ENCODE measurements at regions of chr5 and their contacts with region 1.

Region 1: GRCh38 chr5:142012792-142013388 is at the start of gene GNPDA1:
- DNase-seq: peak; percentile 78
- H3K4me3 Mint-ChIP-seq: peak within 1 kb of the TSS; percentile 82
- H3K27ac Mint-ChIP-seq: peak within 1 kb of the TSS; percentile 82
- H3K4me1 Mint-ChIP-seq: peaks cover 35% of the 10 kb centered on the region
- H3K27me3 Mint-ChIP-seq: no peaks in the 10 kb centered on the region
- CTCF ChIP-seq: no peak
- total RNA-seq, gene GNPDA1: 36.1 and 60.9 TPM in 2 replicates

Region 2: DNA sequence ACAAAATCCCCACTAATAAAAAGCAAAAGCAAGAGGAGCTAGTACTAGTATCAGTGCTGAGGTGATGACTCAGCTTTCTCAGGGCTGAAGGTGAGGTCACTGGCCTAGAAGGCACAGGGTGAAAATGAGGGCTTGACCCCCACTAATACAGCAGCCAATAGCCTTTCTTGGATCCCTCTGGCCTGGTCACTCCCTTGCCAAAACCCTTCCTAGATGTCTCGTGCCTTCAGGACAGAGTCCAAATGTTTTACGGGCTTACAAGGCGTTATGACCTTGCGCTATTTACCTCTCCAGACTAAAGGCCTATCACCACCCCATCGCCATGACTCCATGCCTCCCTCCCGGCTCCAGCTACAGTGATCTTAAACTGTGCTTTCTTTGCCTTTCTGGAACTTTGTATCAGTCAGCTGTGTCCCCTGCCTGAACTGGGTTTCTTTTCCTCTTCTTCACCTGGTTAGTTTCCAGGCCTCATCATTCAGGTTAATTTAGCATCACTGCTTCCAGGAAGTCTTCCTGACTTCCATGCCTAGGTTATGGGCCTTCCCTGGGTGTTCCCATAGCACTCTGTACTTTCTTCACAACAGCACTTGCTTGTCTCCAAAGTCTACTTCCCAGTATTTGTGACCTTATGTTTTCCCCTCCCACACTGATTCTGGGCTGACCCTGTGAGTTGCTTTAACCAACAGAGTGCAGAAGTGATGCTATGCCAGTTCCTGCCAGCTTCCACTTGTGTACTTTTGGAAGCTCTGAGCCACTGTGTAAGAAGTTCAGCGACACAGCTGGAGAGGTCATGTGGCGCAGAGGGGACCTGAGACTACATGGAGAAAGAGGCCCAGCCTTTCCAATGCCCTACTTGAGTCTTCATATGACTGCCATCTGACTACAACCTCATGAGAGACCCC is 93.4 kb before region 1 on chr5:
- CTCF ChIA-PET with region 1: no interaction called
- POLR2A ChIA-PET with region 1: no interaction called
- intact Hi-C with region 1: no loop called
- DNase-seq: no peak
- H3K4me3 Mint-ChIP-seq: no peak overlapping the region
- H3K27ac Mint-ChIP-seq: no peak overlapping the region
- H3K4me1 Mint-ChIP-seq: peaks cover 12% of the 10 kb centered on the region
- H3K27me3 Mint-ChIP-seq: peaks cover 16% of the 10 kb centered on the region
- CTCF ChIP-seq: no peak

Region 3: DNA sequence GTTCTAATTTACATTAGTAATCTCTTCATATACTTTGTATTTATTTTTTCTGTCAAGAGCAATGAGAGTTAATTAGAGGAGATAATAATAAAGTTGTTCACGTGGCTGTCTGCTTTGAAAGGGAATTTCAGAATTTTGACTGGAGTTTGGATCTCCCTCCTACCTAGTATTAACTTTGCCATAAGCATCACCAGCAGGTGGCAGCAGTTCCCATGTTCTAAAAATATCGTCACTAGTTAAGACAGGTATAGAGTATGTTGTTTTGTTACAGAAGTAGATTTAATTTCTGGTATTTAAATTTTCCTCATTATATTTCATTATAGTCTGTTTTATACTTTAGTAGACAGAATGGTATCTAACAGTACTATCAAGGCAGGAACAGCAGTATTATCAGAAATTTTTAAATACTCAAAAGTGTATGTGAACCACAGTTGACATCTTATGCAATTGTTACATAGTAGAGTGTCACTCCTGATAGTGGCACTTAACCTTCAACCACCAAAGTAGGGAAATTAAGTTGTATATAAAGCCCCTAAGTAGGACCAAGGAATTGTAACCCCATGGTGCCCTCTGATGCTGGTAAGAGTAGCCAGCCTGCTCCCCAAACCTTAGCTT is 20.4 kb before region 1 on chr5:
- CTCF ChIA-PET with region 1: interaction called, 100 read pairs
- POLR2A ChIA-PET with region 1: interaction called, 51 read pairs
- intact Hi-C with region 1: loop called (anchors 1 kb)
- DNase-seq: peak; percentile 88
- H3K4me3 Mint-ChIP-seq: no peak overlapping the region
- H3K27ac Mint-ChIP-seq: no peak overlapping the region
- H3K4me1 Mint-ChIP-seq: no peaks in the 10 kb centered on the region
- H3K27me3 Mint-ChIP-seq: no peaks in the 10 kb centered on the region
- CTCF ChIP-seq: peak; percentile 82

Region 4: GRCh38 chr5:142000703-142001484 is 12.0 kb before region 1 on chr5:
- CTCF ChIA-PET with region 1: interaction called, 22 read pairs
- POLR2A ChIA-PET with region 1: interaction called, 34 read pairs
- intact Hi-C with region 1: no loop called
- DNase-seq: peak; percentile 43
- H3K4me3 Mint-ChIP-seq: no peak overlapping the region
- H3K27ac Mint-ChIP-seq: no peak overlapping the region
- H3K4me1 Mint-ChIP-seq: peaks cover 9% of the 10 kb centered on the region
- H3K27me3 Mint-ChIP-seq: no peaks in the 10 kb centered on the region
- CTCF ChIP-seq: no peak

Region 5: DNA sequence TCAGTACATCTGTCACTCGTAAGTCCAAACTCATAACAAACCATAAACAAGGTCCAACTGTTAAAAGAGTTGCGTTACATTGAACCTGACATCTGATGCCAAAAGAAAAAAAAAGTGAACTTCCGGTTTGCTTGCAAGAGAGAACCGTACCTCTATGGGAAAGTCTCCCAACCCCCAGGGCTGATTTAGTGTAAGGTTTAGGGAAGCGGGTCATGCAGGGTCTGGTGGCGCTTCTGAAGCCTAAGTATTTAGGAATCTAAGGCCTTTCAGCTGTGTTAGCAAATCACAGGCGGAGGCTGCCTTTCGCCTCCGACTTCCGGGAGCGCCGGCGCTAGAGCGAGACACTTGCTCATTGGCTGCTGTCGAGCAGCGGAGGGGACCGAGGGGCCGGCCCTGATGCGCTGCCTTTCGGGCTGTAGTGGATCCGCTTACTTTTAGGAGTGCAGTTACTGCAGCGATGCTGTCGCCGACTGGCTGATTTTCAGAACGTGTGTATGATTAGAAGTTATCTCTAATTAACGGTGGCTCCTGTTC is 11.9 kb after region 1 on chr5:
- CTCF ChIA-PET with region 1: interaction called, 16 read pairs
- POLR2A ChIA-PET with region 1: interaction called, 78 read pairs
- intact Hi-C with region 1: no loop called
- DNase-seq: peak; percentile 91
- H3K4me3 Mint-ChIP-seq: peak overlapping the region; percentile 83
- H3K27ac Mint-ChIP-seq: peak overlapping the region; percentile 96
- H3K4me1 Mint-ChIP-seq: peaks cover 6% of the 10 kb centered on the region
- H3K27me3 Mint-ChIP-seq: no peaks in the 10 kb centered on the region
- CTCF ChIP-seq: no peak

Region 6: DNA sequence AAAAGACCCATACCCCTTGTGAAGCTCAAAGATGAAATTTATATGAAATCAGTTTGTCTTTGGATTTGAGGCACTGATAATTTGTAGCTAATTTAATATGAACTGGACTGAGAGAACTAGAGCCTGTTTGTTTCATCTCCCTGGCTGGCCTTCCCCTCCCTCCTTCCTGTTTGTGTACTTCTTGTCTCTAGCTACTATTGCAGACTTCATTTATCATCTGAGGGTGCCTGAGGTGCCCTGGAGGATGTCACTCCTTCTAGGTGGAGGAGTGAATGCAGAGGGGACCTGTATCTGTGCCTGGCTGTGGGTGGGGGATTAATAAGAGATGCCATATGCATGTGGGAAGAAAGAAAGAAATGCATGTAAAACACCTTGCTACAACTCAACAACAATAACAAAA is 22.1 kb after region 1 on chr5:
- CTCF ChIA-PET with region 1: interaction called, 10 read pairs
- POLR2A ChIA-PET with region 1: no interaction called
- intact Hi-C with region 1: no loop called
- DNase-seq: no peak
- H3K4me3 Mint-ChIP-seq: no peak overlapping the region
- H3K27ac Mint-ChIP-seq: no peak overlapping the region
- H3K4me1 Mint-ChIP-seq: no peaks in the 10 kb centered on the region
- H3K27me3 Mint-ChIP-seq: no peaks in the 10 kb centered on the region
- CTCF ChIP-seq: no peak

Region 7: GRCh38 chr5:142059294-142059940 is 46.5 kb after region 1 on chr5:
- CTCF ChIA-PET with region 1: interaction called, 4 read pairs
- POLR2A ChIA-PET with region 1: interaction called, 34 read pairs
- intact Hi-C with region 1: loop called (anchors 5 kb)
- DNase-seq: peak; percentile 53
- H3K4me3 Mint-ChIP-seq: no peak overlapping the region
- H3K27ac Mint-ChIP-seq: no peak overlapping the region
- H3K4me1 Mint-ChIP-seq: peaks cover 24% of the 10 kb centered on the region
- H3K27me3 Mint-ChIP-seq: no peaks in the 10 kb centered on the region
- CTCF ChIP-seq: no peak

Region 8: DNA sequence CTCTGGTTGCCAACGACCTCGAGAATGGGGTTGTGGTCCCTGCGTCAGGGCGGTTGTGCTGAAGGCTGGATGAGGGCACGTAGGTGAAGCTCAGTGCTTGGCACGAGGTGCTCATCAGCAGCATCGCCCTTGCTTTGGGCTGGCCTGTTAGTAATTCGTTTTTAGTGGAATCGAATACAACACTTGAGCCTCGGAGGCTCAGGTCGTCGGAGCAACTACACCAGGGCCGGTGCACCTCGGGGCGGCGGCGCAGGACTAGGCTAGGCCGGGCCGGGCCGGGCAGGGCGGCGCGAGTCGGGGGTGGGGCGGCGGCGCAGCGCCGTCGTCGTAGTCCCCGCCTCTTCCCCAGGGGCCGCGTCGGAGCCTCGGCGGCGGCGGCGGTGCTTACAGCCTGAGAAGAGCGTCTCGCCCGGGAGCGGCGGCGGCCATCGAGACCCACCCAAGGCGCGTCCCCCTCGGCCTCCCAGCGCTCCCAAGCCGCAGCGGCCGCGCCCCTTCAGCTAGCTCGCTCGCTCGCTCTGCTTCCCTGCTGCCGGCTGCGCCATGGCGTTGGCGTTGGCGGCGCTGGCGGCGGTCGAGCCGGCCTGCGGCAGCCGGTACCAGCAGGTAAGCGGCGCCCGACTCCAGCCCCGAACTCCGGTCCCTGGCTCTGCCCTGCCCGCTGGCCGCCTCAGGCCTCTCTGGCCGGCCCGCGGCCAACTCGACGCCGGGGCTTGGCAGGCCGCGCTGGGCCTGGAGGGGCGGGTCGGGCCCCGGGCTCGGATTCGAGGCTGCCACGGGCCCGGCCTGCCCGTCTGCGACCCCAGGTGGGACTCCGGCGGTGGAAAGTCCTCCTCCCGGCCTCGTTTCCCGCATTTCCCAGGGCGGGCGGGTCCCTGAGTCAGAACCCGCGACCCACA is 95.8 kb after region 1 on chr5 and contains the start of gene NDFIP1:
- CTCF ChIA-PET with region 1: interaction called, 9 read pairs
- POLR2A ChIA-PET with region 1: interaction called, 98 read pairs
- intact Hi-C with region 1: loop called (anchors 1 kb)
- DNase-seq: peak; percentile 88
- H3K4me3 Mint-ChIP-seq: peak within 1 kb of the TSS; percentile 94
- H3K27ac Mint-ChIP-seq: peak within 1 kb of the TSS; percentile 86
- H3K4me1 Mint-ChIP-seq: peaks cover 16% of the 10 kb centered on the region
- H3K27me3 Mint-ChIP-seq: no peaks in the 10 kb centered on the region
- CTCF ChIP-seq: no peak
- total RNA-seq, gene NDFIP1: 50.8 and 61.6 TPM in 2 replicates

Region 9: GRCh38 chr5:142466195-142466971 is 453.5 kb after region 1 on chr5:
- CTCF ChIA-PET with region 1: no interaction called
- POLR2A ChIA-PET with region 1: no interaction called
- intact Hi-C with region 1: no loop called
- DNase-seq: peak; percentile 31
- H3K4me3 Mint-ChIP-seq: no peak overlapping the region
- H3K27ac Mint-ChIP-seq: peak overlapping the region; percentile 28
- H3K4me1 Mint-ChIP-seq: peaks cover 9% of the 10 kb centered on the region
- H3K27me3 Mint-ChIP-seq: no peaks in the 10 kb centered on the region
- CTCF ChIP-seq: no peak